Right ventricle myocardium inferior (tissue), 1 donor: ENCODE measurements at regions of chr1 and their contacts with region 1.

Region 1: GRCh38 chr1:151254217-151255213 is at the start of gene PSMD4:
- DNase-seq: peak; percentile 95
- ATAC-seq: peak; percentile 99
- total RNA-seq, gene PSMD4: 164 TPM

Region 2: DNA sequence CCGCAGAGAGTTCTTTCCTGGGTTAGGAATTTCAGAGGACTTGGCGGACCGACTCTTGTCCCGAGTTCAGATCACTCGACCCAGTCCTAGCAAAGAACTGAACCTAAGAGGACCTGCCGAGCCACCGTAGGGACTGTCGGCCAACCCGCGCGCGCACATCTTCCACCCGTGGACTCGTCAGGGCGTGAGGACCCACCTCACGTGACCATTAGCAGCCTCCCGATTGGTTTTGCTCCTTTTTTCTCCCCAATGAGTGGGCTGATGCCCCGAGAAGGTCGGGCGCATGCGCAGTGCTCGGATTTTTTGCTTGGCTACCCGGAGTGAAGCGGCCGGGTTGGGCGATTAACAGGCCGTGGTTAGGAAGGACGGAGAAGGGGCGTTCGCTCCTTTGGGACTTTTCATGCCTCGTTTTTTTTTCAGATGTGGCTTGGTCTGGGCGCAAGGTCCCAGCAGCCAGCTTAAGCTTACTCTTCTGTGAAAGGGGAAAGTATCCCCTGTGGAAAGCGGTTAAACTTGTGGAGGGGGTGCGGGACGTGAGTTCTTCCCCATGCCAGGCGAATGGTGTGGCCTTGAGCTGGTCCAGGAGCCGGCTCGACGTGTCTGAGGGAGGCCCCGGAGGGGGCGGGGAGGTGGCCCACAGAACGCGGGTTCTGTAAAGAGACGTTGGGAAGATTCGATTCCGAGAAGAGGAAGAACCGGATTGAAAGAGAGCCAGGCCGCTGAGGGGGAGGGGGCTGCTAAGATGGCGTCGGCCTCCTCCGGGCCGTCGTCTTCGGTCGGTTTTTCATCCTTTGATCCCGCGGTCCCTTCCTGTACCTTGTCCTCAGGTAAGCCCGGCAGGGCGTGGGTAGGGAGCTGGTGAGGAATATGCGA is 56.0 kb before region 1 on chr1 and contains the start of gene PIP5K1A:
- intact Hi-C with region 1: loop called (anchors 2 kb)
- DNase-seq: peak; percentile 100
- ATAC-seq: peak; percentile 97
- total RNA-seq, gene PIP5K1A: 34.8 TPM

Region 3: DNA sequence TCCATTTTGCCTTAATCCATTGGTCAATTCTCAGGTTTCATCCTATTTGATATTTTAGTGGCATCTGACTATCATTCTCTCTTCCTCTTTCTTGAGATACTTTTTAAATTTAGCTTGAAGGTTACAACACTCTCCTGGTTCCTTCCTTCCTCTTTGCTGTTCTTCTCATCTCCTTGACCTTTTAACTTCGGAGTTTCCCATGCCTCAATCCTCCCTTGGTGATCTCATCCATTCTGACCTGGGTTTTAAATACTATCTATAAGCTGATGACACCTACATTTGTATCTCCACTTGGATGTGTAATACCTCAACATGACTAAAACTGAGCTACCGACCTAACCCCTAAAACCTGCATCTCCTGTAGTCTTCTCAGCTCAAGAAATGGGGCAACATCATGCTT is 22.7 kb after region 1 on chr1:
- intact Hi-C with region 1: no loop called
- DNase-seq: no peak
- ATAC-seq: no peak